Tibial artery (tissue), 4 donors: ENCODE measurements at regions of chr1 and their contacts with region 1.

Region 1: DNA sequence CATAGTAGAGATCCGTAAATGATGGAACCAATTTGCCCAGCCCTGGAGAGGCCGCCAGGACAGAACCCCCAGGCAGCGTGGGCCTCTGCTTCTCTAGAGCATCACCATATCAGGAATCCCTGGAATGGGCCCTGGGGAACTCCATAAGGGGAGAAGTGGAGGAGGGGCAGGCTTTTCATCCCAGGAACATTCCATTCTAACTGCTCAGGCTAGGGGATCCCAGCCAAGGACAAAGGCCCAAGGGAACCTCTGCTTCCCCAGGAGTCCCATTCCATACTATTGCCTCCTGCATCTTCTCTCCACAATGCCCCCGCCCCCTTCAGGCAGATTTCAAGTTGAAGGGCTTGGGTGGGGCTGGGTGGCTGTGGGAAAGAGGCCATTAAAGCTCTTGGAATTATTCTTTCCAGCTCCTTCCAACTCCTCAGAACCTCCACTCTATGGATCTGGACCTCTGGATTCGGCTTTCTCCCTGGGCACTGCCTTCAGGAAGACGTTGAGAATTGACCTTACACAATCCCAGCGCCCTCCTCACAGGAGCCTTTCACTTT is 6.0 kb downstream of the TRNP1 start:
- DNase-seq: peak; percentile 84 to 96
- H3K4me3 ChIP-seq: no peak overlapping the region
- H3K27ac ChIP-seq: peak overlapping the region; percentile 89 to 90
- H3K4me1 ChIP-seq: peaks cover 0 to 96% (median 77%) of the 10 kb centered on the region in 4 donors
- H3K27me3 ChIP-seq: no peaks in the 10 kb centered on the region
- CTCF ChIP-seq: peak in 1 of 2 experiments; percentile 11

Region 2: DNA sequence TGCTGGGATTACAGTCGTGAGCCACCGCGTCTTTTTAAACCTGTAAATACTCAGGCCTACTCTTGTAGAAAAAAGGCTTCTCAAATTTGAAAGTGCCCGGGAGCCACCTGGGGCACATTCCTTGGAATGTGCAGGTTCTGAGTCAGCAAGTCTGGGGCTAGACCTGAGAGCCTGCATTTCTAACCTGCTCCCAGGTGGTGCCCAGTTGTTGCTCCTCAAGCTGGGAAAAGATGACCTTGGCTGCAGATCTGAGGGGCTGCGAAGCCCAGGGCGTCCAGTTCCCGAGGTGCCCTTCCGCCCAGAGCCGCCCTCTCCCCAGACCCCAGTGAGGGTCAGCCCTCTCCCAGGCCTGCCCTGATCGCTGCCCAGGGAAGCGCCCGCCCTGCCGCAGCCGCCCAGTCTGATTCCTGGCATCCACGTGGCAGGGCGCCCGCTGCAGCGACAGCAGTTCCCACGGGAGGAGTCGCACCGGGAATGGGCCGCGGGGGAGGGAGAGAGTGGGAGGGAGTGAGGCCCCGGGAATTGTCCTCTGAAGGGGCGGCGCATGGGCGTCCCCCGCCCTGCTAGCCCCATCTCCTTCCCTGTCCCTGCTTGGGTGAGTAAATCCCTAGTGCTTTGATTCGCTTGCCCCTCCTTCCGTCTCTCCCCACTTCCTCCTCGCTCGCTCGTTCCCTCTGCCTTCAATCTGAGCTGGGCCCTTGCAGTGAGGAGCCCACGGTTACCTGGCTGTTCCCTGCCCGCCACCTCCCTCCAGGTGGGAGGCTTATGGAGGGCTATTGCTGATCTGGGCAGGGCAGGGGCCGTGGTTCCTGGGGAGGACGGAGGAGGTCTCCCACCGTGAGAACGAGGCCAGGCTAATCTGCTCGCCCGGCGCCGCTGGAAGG is 32.0 kb after region 1 on chr1:
- intact Hi-C with region 1: loop called (anchors 5 kb)
- DNase-seq: peak; percentile 76 to 95
- H3K4me3 ChIP-seq: peak overlapping the region; percentile 36 to 52
- H3K27ac ChIP-seq: peak overlapping the region; percentile 85 to 86
- H3K4me1 ChIP-seq: peaks cover 0 to 36% (median 30%) of the 10 kb centered on the region in 4 donors
- H3K27me3 ChIP-seq: no peaks in the 10 kb centered on the region
- CTCF ChIP-seq: no peak

Region 3: GRCh38 chr1:27203946-27204345 is 204.4 kb after region 1 on chr1:
- intact Hi-C with region 1: no loop called
- DNase-seq: no peak
- H3K4me3 ChIP-seq: no peak overlapping the region
- H3K27ac ChIP-seq: no peak overlapping the region
- H3K4me1 ChIP-seq: no peaks in the 10 kb centered on the region
- H3K27me3 ChIP-seq: peaks cover 0 to 3% of the 10 kb centered on the region in 2 donors
- CTCF ChIP-seq: no peak

Region 4: DNA sequence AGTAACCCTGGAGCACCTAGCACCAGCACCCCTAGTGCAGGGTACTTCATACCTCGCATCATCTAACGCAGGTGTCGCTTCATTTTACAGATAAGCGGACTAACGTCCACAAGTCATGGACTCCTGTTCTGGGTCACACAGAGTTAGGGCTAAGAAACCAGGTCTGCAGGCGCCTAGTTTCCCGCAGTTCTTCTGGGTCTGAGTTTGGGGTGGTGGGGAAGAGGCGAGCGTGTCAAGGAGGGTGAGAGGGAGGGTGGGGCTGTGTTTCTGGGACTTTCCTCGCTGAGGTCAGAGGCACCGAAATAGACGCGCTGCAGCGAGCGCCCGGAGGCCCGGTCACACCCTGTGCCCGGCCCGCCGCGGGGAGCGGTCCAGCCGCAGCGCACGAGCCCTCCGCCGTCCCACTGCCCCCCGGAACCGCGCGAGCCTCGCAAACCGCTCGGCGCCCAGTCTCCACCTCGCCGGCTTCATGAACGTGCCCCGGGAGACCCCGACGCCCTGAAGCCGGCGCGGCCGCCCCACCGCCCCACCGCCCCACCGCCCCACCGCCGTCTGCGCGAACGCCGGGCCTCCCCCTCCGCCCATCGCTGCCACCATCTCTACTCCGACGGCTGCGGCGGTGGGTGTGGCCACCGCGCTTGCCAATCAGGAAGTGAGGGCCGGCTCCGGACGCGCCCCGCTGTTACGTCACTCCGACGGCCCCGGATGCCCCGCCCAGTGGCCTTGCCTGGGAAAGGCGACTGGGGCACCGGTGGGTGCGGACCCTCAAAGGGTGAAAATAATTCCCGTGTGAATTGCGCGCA is 660.2 kb after region 1 on chr1:
- intact Hi-C with region 1: no loop called
- DNase-seq: peak; percentile 90 to 95
- H3K4me3 ChIP-seq: peak overlapping the region; percentile 65 to 80
- H3K27ac ChIP-seq: peak overlapping the region; percentile 91 to 97
- H3K4me1 ChIP-seq: peaks cover 3 to 50% (median 21%) of the 10 kb centered on the region in 4 donors
- H3K27me3 ChIP-seq: no peaks in the 10 kb centered on the region
- CTCF ChIP-seq: no peak